Activated CD8-positive, alpha-beta memory T cell treated with anti-CD3 and anti-CD28 coated beads, Interleukin-2, amount 10 ng/mL, durations not matched to agents 7 days and 5 days (primary cell): ENCODE measurements at regions of chr10 and their contacts with region 1.

Region 1: DNA sequence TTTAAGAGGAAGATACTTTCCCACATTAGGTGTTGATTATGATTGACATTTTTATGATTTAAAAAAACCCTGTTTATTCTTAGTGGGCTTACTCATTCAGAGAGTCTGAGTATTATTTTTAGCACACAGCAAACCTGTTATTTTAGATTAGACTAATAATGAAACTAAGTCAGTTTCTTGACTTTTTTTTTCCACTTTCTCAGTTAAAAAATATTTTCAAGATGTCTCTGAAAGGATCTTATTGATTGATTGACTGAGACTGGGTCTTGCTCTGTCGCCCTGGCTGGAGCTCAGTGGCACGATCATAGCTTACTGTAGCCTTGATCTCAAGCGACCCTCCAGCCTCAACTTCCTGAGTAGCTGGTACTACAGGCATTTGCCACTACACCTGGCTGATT is 20.4 kb upstream of the INPP5F start:
- DNase-seq: no peak
- ATAC-seq: peak; percentile 63
- H3K4me3 Mint-ChIP-seq: peak overlapping the region; percentile 62
- H3K27ac Mint-ChIP-seq: peak overlapping the region; percentile 95
- H3K4me1 Mint-ChIP-seq: peaks cover 66% of the 10 kb centered on the region
- H3K27me3 Mint-ChIP-seq: no peaks in the 10 kb centered on the region

Region 2: DNA sequence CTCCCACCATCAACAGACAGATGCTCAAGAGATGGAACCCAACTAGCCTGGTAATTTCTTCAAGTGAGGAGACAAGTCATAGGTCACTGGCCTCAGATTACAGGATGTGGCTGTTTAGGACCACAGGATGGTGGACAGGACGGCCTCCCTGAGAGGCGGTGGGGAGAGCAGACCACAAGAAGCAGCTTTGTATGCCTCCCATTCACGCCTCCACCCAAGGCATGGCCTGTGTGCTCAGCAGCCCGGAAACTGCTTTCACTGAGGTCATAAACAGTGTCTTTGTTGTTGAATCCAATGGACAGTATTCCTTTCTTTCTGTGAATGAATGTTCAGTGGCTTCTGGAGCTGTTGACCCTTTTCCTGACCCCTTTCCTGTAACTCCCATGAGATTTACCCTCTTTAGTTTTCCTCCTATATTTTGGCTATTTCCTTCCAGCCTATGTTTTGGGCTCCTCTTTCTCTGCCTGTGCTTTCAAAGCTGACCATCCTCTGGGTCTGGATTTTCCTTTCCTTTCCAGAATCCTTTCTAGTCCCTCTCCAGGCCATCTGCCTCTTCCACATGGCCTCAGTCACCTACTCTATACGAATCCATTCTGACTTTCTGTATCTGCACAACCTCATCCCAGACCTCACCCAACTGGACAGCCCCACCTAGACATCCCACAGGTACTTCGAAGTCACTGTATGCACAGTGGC is 12.0 kb before region 1 on chr10:
- CTCF ChIA-PET with region 1: interaction called, 68 read pairs
- DNase-seq: peak; percentile 78
- ATAC-seq: peak; percentile 77
- H3K4me3 Mint-ChIP-seq: no peak overlapping the region
- H3K27ac Mint-ChIP-seq: peak overlapping the region; percentile 44
- H3K4me1 Mint-ChIP-seq: peaks cover 17% of the 10 kb centered on the region
- H3K27me3 Mint-ChIP-seq: peaks cover 4% of the 10 kb centered on the region

Region 3: GRCh38 chr10:119737827-119738226 is 32.4 kb after region 1 on chr10:
- CTCF ChIA-PET with region 1: no interaction called
- DNase-seq: no peak
- ATAC-seq: no peak
- H3K4me3 Mint-ChIP-seq: no peak overlapping the region
- H3K27ac Mint-ChIP-seq: no peak overlapping the region
- H3K4me1 Mint-ChIP-seq: peaks cover 18% of the 10 kb centered on the region
- H3K27me3 Mint-ChIP-seq: no peaks in the 10 kb centered on the region

Region 4: GRCh38 chr10:119859420-119860258 is 154.2 kb after region 1 on chr10:
- CTCF ChIA-PET with region 1: interaction called, 10 read pairs
- DNase-seq: no peak
- ATAC-seq: peak; percentile 27
- H3K4me3 Mint-ChIP-seq: no peak overlapping the region
- H3K27ac Mint-ChIP-seq: peak overlapping the region; percentile 36
- H3K4me1 Mint-ChIP-seq: peaks cover 44% of the 10 kb centered on the region
- H3K27me3 Mint-ChIP-seq: no peaks in the 10 kb centered on the region